ENCODE measurements at regions of chr17 and their contacts with region 1.

Region 1: DNA sequence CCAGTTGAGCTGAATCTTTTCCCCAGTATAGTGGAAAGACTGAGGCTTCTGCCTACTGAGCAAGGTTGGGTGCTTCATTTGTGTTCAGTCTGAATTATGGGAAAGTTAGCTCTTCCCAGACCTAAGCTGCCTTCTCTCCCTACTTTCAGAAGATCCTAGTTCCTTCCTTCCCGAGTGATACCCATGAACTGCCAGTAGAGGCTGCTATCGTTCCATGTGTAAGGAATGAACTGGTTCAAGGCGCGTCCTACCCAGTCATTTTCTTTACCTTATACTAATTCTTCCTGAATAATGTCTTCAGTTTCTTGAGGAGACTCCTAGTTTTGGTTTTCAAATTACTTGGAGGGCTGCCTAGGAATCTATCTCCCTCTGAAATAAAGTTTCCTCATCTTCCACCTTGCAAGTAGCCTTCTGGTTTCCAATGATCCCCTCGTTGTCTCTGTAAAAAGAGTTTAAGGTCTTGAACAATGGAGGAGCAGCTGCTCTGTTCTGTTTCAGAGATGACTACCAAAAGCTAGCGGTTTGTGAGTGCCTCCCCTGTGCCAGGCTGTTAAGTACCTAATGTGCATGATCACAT is 934 bp upstream of the AOC2 start:
- DNase-seq: peak; percentile 32 to 58 (median 51)
- H3K4me3 ChIP-seq: no peak overlapping the region
- H3K4me3 Mint-ChIP-seq: no peak overlapping the region
- H3K27ac ChIP-seq: no peak overlapping the region
- H3K27ac Mint-ChIP-seq: peak overlapping the region in 1 of 7 donors; percentile 69
- H3K4me1 ChIP-seq: peaks cover 19 to 23% of the 10 kb centered on the region in 2 donors
- H3K4me1 Mint-ChIP-seq: peaks cover 28% of the 10 kb centered on the region
- H3K27me3 ChIP-seq: no peaks in the 10 kb centered on the region
- H3K27me3 Mint-ChIP-seq: peaks cover 0 to 5% (median 2%) of the 10 kb centered on the region in 3 donors
- CTCF ChIP-seq: peak; percentile 86

Region 2: GRCh38 chr17:42997984-42998938 is 154.8 kb after region 1 on chr17 and contains the start of gene RPL27:
- intact Hi-C with region 1: loop called (anchors 5 to 10 kb)
- DNase-seq: peak; percentile 99 to 100 (median 99)
- H3K4me3 ChIP-seq: peak within 1 kb of the TSS; percentile 71 to 99 (median 76)
- H3K4me3 Mint-ChIP-seq: peak within 1 kb of the TSS; percentile 91 to 99
- H3K27ac ChIP-seq: peak within 1 kb of the TSS; percentile 94 to 99
- H3K27ac Mint-ChIP-seq: peak within 1 kb of the TSS; percentile 96 to 99 (median 99)
- H3K4me1 ChIP-seq: peaks cover 47 to 50% of the 10 kb centered on the region in 2 donors
- H3K4me1 Mint-ChIP-seq: peaks cover 45% of the 10 kb centered on the region
- H3K27me3 ChIP-seq: no peaks in the 10 kb centered on the region
- H3K27me3 Mint-ChIP-seq: peaks cover 0 to 3% (median 0%) of the 10 kb centered on the region in 3 donors
- CTCF ChIP-seq: peak; percentile 95
- polyA plus RNA-seq, gene RPL27: 1,073 to 2,156 (median 1,232) TPM